Right ventricle myocardium inferior (tissue), 1 donor: ENCODE measurements at regions of chr12 and their contacts with region 1.

Region 1: DNA sequence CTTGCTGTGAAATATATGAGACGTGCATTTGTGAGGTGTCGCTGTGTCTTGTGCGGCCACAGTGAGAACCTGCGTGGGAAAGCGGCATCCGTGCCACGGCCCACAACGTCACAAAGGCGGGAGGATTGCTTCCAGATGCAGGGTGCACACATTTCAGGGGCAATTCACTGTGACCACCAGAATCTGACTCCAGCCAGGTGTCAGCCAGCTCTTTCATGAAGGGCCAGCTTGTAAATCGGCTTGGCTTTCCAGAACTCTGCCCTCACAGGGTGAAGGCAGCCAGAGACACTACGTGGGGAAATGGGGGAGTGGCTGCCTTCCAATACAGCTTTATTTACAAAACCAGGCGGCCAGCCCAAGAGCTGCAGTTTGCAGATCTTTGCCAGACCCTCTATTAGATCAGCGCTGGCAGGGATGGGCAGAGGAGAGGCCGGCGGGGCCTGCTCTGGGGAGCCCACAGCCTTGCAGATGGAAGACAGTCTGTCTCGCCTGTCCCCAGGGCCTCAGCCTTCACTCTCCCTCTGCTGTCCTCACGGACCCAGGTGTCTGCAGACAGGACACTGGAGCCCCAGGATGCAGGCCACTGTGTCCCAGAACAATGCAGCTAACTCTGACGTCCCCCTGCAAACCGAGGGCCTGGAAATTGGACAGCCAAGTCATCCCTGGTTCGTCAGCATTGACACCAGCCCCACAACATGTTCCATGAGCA is 53.5 kb downstream of the ADGRD1 start:
- DNase-seq: peak; percentile 82
- ATAC-seq: peak; percentile 74

Region 2: DNA sequence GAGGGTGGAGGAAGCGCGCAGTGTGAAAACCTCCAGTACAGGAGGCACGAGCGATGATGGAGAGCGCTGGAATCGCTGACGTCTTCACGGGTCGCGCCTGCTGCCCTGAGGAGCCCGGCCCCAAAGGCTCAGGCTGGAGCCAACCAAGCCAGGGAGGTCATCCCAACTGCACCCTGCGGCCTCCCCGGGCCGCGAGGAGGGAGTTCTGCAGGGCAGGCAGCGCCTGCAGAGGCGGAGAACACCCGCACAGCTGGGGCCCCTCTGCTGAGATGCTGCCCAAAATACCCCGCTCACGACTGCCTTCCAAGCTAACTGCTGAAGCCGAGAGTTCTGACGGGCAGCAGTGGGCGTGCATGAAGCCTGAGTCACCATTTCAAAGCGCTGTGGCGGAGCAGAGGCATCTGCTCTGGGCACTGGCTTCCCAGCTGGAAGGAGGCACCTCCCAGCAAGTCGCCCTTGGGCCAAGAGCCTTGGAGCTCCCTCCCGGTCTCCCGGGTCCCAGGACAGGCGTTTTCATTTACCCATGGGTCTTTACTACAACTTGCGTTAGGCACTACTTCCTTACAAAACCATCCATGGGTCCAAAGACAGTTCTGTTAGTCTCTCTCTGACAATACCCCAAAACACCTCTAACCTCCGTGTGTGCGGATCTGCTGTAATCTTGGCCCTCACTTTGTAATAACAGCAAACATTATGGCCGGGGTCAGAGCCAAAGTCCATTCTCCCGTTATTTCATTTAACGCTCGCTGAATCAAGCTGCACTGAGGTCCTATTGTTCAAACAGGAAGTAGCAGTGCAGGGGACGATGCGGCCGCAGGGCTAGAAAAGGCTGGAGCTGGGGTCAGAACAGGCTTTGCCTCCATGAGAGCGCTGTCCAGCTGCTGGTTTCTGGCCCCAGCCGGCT is 231.0 kb before region 1 on chr12:
- intact Hi-C with region 1: no loop called
- DNase-seq: peak; percentile 73
- ATAC-seq: peak; percentile 49

Region 3: GRCh38 chr12:130953771-130954543 is 53.2 kb before region 1 on chr12 and contains the start of gene ADGRD1:
- intact Hi-C with region 1: loop called (anchors 2 kb)
- DNase-seq: no peak
- ATAC-seq: peak; percentile 91
- total RNA-seq, gene ADGRD1: 89.1 TPM

Region 4: DNA sequence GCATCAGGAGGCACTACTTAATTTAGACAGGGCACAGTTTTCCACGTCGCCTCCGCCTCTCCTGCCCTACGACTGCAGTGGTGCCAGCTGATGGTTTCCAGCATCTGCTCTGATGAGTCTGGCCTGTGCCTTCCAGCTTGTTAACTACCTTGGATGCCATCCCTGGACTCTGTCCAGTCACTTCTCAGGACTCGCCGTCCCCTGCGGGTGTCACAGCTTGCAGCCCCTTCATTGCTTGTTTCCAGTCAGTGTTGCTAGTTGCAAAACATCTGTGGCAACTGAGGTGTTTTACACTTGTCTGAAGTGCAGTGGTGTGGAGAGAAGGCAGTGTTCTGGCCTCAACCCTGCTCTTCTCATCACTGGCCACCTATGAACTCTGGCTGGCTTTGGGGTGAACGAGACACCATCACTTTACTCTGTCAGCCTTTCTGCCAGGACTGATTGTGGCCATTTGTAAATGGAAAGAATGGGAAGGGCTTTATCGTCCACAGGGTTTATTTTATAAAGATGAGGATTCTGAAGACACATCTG is 45.2 kb before region 1 on chr12:
- intact Hi-C with region 1: loop called (anchors 1 kb)
- DNase-seq: peak; percentile 85
- ATAC-seq: peak; percentile 94

Region 5: GRCh38 chr12:130980939-130981742 is 26.0 kb before region 1 on chr12:
- intact Hi-C with region 1: no loop called
- DNase-seq: peak; percentile 22
- ATAC-seq: no peak

Region 6: DNA sequence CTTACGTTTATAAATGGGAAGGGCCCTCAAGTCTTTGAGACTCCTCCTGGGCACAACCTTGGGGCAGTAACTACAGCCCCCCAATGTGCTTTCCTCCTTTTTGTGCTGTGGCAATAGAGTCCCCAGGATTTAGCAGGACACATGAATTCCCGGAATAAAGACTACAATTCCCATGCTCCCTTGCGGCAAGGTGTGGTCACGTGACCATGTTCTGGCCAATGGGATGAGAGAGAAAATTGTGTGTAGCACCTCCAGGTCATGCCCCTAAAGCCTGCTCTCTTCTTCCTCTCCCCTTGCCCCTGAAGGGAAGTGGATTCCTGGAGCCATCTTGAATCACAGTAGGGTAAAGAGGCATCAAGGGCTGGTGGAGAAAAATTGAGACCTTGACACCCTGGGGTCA is 408.6 kb after region 1 on chr12:
- intact Hi-C with region 1: no loop called
- DNase-seq: no peak
- ATAC-seq: no peak

Region 7: GRCh38 chr12:131511391-131511802 is 504.2 kb after region 1 on chr12:
- intact Hi-C with region 1: no loop called
- DNase-seq: no peak
- ATAC-seq: no peak